Caco-2 (cell line): ENCODE measurements at regions of chr12 and their contacts with region 1.

Region 1: DNA sequence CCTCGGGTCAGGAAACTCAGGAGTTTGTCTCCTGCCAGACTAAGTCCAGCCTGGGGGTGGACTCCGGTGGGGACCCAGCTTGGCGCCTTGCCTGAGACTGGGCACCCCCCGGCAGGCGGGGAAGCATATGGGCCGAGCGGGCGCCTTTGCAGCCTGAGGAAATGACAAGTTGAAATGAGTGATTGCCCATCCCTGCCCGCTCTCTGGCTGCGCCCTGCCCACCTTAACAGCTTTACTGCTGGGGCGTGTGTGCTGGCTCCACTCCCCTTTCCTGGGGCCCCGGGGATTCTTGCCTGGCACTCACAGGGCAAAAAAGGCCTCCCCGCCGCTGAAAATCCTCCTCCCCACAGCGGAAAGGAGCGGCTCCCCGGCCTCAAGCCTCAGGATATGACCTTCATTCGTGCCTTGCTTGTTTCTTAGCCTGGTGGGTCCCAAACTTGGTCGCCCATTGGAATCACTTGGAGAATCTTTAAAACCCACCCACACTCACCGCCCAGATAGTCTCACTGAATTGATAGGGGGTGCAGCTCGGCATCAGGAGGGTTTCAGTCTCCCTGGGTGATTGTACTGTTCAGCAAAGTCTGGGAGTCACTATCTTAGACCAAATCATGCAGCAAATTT is 1.5 kb downstream of the RFLNA start:
- DNase-seq: peak in 1 of 2 experiments; percentile 36
- H3K4me3 ChIP-seq: peak overlapping the region; percentile 50
- H3K4me3 Mint-ChIP-seq: peak overlapping the region; percentile 80
- H3K27ac Mint-ChIP-seq: peak overlapping the region; percentile 39
- H3K4me1 ChIP-seq: peaks cover 30% of the 10 kb centered on the region
- H3K4me1 Mint-ChIP-seq: peaks cover 22% of the 10 kb centered on the region
- H3K27me3 ChIP-seq: no peaks in the 10 kb centered on the region
- H3K27me3 Mint-ChIP-seq: no peaks in the 10 kb centered on the region
- CTCF ChIP-seq: no peak

Region 2: DNA sequence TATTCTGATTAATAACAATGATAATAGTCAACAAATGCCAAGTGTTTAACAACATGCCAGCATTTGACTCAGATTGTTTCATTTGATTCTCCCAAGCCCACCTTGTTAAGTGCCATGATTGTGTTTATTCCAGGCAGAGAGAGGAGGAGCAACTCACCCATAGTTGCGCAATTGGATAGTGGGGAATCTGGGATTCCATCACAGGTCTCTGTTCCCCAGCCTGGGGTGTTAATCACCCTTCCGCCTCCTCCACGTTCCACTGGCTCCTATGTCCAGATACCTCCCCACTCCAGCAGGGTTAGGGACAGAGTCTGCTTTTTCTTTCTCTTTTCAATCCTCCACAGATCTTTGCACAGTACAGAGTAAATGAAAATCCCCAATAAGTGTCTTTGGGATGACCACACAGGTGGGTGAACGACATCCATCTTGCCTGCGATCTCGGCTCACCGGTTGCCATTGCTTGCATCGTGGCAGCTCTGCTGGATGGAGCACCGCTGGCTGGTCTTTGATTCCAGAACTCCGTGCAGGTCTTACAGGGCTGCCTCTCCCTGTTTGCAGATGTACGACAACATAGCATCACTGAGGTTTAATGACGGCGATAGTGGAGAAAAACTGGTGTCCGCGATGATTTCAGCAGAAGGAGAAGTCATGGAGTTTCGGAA is 455.5 kb before region 1 on chr12:
- CTCF ChIA-PET with region 1: interaction called, 12 read pairs
- POLR2A ChIA-PET with region 1: no interaction called
- intact Hi-C with region 1: no loop called
- DNase-seq: no peak
- H3K4me3 ChIP-seq: no peak overlapping the region
- H3K4me3 Mint-ChIP-seq: no peak overlapping the region
- H3K27ac Mint-ChIP-seq: no peak overlapping the region
- H3K4me1 ChIP-seq: no peaks in the 10 kb centered on the region
- H3K4me1 Mint-ChIP-seq: no peaks in the 10 kb centered on the region
- H3K27me3 ChIP-seq: no peaks in the 10 kb centered on the region
- H3K27me3 Mint-ChIP-seq: no peaks in the 10 kb centered on the region
- CTCF ChIP-seq: no peak

Region 3: DNA sequence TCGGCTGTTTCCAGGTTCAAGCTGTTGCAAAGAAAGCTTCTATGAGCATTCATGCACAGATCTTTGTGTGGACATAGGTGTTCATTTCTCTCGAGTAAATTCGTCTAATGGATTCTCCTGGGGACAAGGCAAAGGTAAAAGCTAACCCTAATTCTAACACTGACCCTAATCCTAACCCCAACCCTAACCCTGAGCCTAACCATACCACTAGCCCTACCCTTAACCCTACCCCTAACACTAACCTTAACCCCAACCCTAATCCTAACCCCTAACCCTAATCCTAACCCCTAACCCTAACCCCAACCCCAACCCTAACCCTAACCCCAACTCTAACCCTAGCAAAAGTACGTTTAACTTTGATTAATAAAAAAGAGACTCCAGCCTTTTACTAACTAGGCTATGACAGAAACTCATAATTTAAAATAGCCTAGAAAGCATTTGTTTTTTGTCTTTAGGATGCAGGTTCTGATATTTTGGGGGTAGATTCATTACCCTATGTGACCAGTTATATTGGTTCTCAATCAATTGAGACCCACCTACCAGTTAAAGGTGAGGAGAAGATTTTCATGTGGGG is 29.1 kb before region 1 on chr12:
- CTCF ChIA-PET with region 1: no interaction called
- POLR2A ChIA-PET with region 1: no interaction called
- intact Hi-C with region 1: no loop called
- DNase-seq: no peak
- H3K4me3 ChIP-seq: no peak overlapping the region
- H3K4me3 Mint-ChIP-seq: no peak overlapping the region
- H3K27ac Mint-ChIP-seq: no peak overlapping the region
- H3K4me1 ChIP-seq: no peaks in the 10 kb centered on the region
- H3K4me1 Mint-ChIP-seq: peaks cover 23% of the 10 kb centered on the region
- H3K27me3 ChIP-seq: no peaks in the 10 kb centered on the region
- H3K27me3 Mint-ChIP-seq: no peaks in the 10 kb centered on the region
- CTCF ChIP-seq: no peak